Right cardiac atrium (tissue), 5 donors: ENCODE measurements at regions of chr17 and their contacts with region 1.

Region 1: DNA sequence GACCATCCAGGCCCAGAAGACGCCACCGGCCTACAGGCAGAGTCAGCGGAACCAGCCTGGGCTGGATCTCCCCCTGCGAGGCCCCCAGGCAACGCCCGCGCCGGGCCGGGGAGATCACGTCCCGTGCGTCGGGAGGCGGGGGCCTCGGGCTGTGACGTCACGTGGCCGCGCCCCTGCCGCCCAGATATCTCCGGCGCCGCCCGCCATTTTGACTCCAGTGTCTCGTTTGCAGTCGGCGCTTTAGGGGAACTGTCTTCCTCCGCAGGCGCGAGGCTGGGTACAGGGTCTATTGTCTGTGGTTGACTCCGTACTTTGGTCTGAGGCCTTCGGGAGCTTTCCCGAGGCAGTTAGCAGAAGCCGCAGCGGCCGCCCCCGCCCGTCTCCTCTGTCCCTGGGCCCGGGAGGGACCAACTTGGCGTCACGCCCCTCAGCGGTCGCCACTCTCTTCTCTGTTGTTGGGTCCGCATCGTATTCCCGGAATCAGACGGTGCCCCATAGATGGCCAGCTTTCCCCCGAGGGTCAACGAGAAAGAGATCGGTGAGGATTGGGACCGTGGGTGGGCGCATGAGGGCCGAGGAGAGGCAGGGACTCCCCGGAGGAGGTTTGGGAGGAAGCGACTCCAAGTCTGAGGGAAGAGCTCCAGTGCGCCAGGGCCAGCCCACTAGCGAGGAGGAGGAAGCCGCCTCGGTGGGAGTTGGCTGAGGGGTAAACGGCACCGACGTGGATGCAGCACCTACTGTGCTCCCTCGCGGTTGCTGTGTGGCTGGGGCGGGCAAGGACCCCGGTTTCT is at the start of gene WSB1:
- DNase-seq: peak; percentile 95 to 98 (median 98)
- ATAC-seq: peak; percentile 97
- H3K4me3 ChIP-seq: peak within 1 kb of the TSS; percentile 64
- H3K27ac ChIP-seq: peak within 1 kb of the TSS; percentile 96
- H3K4me1 ChIP-seq: peaks cover 10% of the 10 kb centered on the region
- H3K27me3 ChIP-seq: no peaks in the 10 kb centered on the region
- total RNA-seq, gene WSB1: 74.6 to 130 (median 91.7) TPM

Region 2: DNA sequence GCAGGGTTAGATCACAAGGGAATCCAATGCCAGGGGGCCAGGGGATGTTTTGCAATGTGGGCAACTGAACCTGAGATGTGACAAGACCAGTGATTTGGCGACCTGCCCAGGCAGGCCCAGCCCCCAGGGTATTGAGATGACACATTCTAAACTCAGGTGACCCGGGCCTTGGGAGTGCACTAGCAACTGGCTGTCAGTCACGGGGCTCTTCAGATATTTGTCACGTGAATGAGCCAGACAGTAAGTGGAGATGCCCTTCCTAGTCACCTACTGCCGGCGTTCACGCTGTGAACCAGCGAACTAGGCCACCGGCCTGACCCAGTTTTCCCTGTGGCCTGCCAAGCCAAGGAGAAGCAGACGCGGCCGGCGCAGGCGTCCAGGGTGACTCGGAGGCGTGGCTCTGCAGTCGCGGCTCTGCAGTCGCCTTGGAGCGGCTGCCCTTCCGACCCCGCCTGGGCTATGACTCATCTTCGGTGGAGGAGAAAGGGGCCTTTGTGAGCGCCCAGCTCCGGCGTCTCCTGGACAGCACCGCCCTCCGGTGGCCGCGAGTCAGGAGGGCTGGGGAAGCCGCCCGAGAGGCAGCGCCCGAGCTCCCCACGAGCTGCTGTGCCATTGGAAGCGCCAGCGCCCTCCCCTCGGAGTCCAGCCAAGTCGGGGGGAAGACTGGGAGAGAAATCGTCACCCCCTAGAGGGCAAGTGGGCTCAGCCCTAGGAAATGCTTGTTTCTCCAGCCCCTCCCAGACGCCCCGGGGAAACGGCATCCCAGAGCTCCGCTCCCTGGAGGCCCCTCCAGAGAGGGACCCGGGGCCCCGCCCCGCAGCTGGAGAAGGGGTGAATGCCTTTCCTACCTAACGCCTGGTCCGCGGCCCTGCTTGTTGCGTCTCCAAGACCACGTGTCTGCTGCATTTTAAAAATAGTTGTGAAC is 38.7 kb after region 1 on chr17:
- intact Hi-C with region 1: loop called in 2 of 4 experiments (anchors 5 kb)
- DNase-seq: peak; percentile 99 to 100 (median 99)
- ATAC-seq: peak; percentile 97
- H3K4me3 ChIP-seq: peak overlapping the region; percentile 56
- H3K27ac ChIP-seq: peak overlapping the region; percentile 99
- H3K4me1 ChIP-seq: peaks cover 2% of the 10 kb centered on the region
- H3K27me3 ChIP-seq: no peaks in the 10 kb centered on the region